Activated CD4-positive, alpha-beta T cell treated with anti-CD3 and anti-CD28 coated beads for 36 hours (primary cell): ENCODE measurements at regions of chr10 and their contacts with region 1.

Region 1: GRCh38 chr10:92592761-92593618 is at the start of gene KIF11:
- DNase-seq: peak; percentile 99
- ATAC-seq: peak; percentile 84
- H3K4me3 Mint-ChIP-seq: peak within 1 kb of the TSS; percentile 94
- H3K27ac Mint-ChIP-seq: peak within 1 kb of the TSS; percentile 97
- H3K4me1 Mint-ChIP-seq: peaks cover 37% of the 10 kb centered on the region
- H3K27me3 Mint-ChIP-seq: no peaks in the 10 kb centered on the region
- total RNA-seq, gene KIF11: 59.1 to 59.3 TPM

Region 2: DNA sequence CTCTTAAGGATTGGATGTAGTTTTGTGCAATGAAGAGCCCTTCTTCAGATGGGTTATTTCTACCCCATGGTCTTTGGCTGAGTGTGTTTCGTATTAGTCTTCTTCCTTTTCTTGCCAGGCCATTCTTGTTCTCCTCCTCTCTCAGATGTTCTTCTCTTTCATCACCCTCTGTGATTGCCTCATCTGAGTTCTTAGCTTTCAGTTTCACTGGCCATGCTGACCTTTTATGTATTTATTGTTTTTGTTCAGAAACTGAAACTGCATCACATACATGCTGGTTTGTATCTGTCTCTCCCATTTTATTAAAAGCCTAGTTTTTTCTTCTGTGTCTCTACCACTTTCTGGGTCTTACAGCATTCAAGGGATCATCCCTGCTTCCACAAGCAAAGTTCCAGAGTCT is 1394.2 kb before region 1 on chr10:
- CTCF ChIA-PET with region 1: no interaction called
- POLR2A ChIA-PET with region 1: no interaction called
- intact Hi-C with region 1: loop called in 1 of 2 experiments (anchors 10 kb)
- DNase-seq: peak; percentile 19
- ATAC-seq: peak; percentile 30
- H3K4me3 Mint-ChIP-seq: no peak overlapping the region
- H3K27ac Mint-ChIP-seq: peak overlapping the region; percentile 82
- H3K4me1 Mint-ChIP-seq: peaks cover 82% of the 10 kb centered on the region
- H3K27me3 Mint-ChIP-seq: no peaks in the 10 kb centered on the region

Region 3: GRCh38 chr10:92074126-92074887 is 518.7 kb before region 1 on chr10:
- CTCF ChIA-PET with region 1: no interaction called
- POLR2A ChIA-PET with region 1: no interaction called
- intact Hi-C with region 1: no loop called
- DNase-seq: no peak
- ATAC-seq: no peak
- H3K4me3 Mint-ChIP-seq: no peak overlapping the region
- H3K27ac Mint-ChIP-seq: no peak overlapping the region
- H3K4me1 Mint-ChIP-seq: no peaks in the 10 kb centered on the region
- H3K27me3 Mint-ChIP-seq: no peaks in the 10 kb centered on the region

Region 4: GRCh38 chr10:92290837-92291615 is 302.0 kb before region 1 on chr10 and contains the starts of genes CPEB3 and MARCHF5:
- CTCF ChIA-PET with region 1: no interaction called
- POLR2A ChIA-PET with region 1: no interaction called
- intact Hi-C with region 1: loop called (anchors 1 to 2 kb)
- DNase-seq: peak; percentile 97
- ATAC-seq: peak; percentile 98
- H3K4me3 Mint-ChIP-seq: peak within 1 kb of the TSS; percentile 75
- H3K27ac Mint-ChIP-seq: peak within 1 kb of the TSS; percentile 80
- H3K4me1 Mint-ChIP-seq: peaks cover 21% of the 10 kb centered on the region
- H3K27me3 Mint-ChIP-seq: no peaks in the 10 kb centered on the region
- total RNA-seq, gene CPEB3: 1.4 to 1.8 TPM
- total RNA-seq, gene MARCHF5: 11.7 to 25.9 TPM

Region 5: DNA sequence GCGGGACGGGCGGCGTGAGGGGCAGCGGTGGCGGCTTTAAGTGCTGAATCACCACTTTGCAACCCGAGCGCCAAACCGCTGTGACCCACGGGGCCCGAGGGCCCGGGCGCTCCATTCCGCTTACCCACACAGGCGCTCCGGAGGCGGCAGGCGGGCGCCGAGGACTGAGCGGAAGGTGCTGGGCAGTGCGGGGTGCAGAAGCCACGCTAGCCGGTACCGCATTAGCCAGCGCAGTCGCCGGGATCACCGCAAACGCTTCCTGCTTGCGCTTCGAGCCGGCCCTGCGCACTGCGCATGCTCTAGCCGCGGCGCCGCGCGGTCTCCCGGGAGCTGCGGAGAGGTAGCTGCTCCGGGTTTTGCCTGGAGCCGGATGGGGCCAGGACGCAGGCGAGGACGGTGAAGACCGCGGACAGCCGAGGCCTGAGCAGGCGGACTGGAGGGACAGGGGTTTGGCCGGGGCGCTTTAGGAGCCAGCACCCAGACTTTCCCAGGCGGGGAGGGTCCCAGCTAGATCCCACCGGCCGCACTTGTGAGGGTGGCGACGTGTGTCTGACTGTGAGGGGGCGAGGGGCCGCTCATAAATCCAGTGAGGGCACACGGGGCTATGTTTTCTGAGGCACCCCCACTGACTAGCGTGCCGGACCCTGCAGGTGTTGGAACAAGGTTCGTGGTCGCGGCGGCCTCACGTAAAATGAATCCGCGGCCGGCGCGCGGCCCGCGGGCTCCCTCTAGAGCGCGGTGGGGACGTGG is 19.0 kb before region 1 on chr10 and contains the start of gene IDE:
- CTCF ChIA-PET with region 1: interaction called, 38 read pairs
- POLR2A ChIA-PET with region 1: interaction called, 11 read pairs
- intact Hi-C with region 1: loop called (anchors 1 kb)
- DNase-seq: peak; percentile 90
- ATAC-seq: peak; percentile 85
- H3K4me3 Mint-ChIP-seq: peak within 1 kb of the TSS; percentile 77
- H3K27ac Mint-ChIP-seq: peak within 1 kb of the TSS; percentile 88
- H3K4me1 Mint-ChIP-seq: peaks cover 38% of the 10 kb centered on the region
- H3K27me3 Mint-ChIP-seq: no peaks in the 10 kb centered on the region
- total RNA-seq, gene IDE: 30.8 to 35.5 TPM

Region 6: GRCh38 chr10:92799591-92800446 is 206.8 kb after region 1 on chr10:
- CTCF ChIA-PET with region 1: no interaction called
- POLR2A ChIA-PET with region 1: no interaction called
- intact Hi-C with region 1: no loop called
- DNase-seq: no peak
- ATAC-seq: no peak
- H3K4me3 Mint-ChIP-seq: no peak overlapping the region
- H3K27ac Mint-ChIP-seq: no peak overlapping the region
- H3K4me1 Mint-ChIP-seq: no peaks in the 10 kb centered on the region
- H3K27me3 Mint-ChIP-seq: peaks cover 2% of the 10 kb centered on the region

Region 7: GRCh38 chr10:92830478-92831389 is 237.7 kb after region 1 on chr10:
- CTCF ChIA-PET with region 1: no interaction called
- POLR2A ChIA-PET with region 1: no interaction called
- intact Hi-C with region 1: loop called in 1 of 2 experiments (anchors 5 kb)
- DNase-seq: peak; percentile 59
- ATAC-seq: peak; percentile 77
- H3K4me3 Mint-ChIP-seq: peak overlapping the region; percentile 68
- H3K27ac Mint-ChIP-seq: peak overlapping the region; percentile 86
- H3K4me1 Mint-ChIP-seq: peaks cover 17% of the 10 kb centered on the region
- H3K27me3 Mint-ChIP-seq: no peaks in the 10 kb centered on the region

Region 8: DNA sequence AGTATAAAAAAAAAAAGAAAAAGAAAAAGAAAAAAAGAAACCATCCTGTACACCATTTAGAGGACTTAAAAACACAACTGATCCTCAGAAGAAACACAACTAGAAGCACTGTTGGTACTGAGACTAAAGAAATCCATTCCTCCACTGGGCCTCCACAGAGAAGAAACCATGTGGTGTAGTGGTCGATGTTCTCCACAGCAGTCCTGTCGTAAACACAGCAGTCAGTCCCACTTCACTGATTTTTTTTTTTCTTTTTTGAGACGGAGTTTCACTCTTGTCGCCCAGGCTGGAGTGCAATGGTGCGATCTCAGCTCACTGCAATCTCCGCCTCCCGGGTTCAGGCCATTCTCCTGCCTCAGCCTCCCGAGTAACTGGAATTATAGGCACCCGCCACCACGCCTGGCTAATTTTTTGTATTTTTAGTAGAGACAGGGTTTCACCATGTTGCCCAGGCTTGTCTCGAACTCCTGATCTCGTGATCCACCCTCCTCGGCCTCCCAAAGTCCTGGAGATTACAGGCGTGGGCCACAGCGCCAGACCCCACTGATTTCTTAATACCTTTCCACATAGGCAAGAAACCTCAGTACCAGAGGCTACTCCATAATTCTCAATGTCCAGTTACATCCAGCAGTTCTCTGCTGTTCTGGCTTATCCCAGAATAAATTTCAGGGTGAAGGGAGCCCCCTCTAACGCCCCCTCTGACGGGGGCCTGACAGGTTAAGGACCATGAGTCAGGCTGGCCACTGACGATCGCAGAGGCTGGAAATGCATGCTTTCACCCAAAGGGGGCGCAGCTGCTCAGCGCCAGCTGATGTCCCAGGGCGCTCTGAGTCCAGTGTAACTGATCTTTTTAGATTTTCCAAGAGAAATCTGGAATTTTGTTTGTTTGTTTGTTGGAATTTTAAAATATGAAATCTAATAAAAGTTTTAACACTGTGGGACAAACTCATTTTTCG is 948.7 kb after region 1 on chr10:
- CTCF ChIA-PET with region 1: no interaction called
- POLR2A ChIA-PET with region 1: interaction called, 15 read pairs
- intact Hi-C with region 1: no loop called
- DNase-seq: peak; percentile 55
- ATAC-seq: peak; percentile 64
- H3K4me3 Mint-ChIP-seq: no peak overlapping the region
- H3K27ac Mint-ChIP-seq: no peak overlapping the region
- H3K4me1 Mint-ChIP-seq: no peaks in the 10 kb centered on the region
- H3K27me3 Mint-ChIP-seq: peaks cover 8% of the 10 kb centered on the region